ENCODE measurements at regions of chr4 and their contacts with region 1.

Region 1: GRCh38 chr4:82447886-82448285 is 17.5 kb downstream of the ENOPH1 start:
- DNase-seq: no peak
- ATAC-seq: no peak
- H3K4me3 ChIP-seq: no peak overlapping the region
- H3K27ac ChIP-seq: no peak overlapping the region
- H3K4me1 ChIP-seq: no peaks in the 10 kb centered on the region
- H3K27me3 ChIP-seq: no peaks in the 10 kb centered on the region
- CTCF ChIP-seq: no peak
- POLR2A ChIP-seq: no peak
- RAD21 ChIP-seq: no peak

Region 2: GRCh38 chr4:82890901-82891706 is 443.2 kb after region 1 on chr4 and contains the start of gene SEC31A:
- CTCF ChIA-PET with region 1: no interaction called
- POLR2A ChIA-PET with region 1: no interaction called
- dilution Hi-C with region 1: no loop called
- in situ Hi-C with region 1: no loop called
- intact Hi-C with region 1: no loop called
- DNase-seq: peak; percentile 92
- ATAC-seq: peak; percentile 95
- H3K4me3 ChIP-seq: peak within 1 kb of the TSS; percentile 94
- H3K27ac ChIP-seq: peak within 1 kb of the TSS; percentile 98
- H3K4me1 ChIP-seq: no peaks in the 10 kb centered on the region
- H3K27me3 ChIP-seq: no peaks in the 10 kb centered on the region
- CTCF ChIP-seq: no peak
- POLR2A ChIP-seq: peak; percentile 98
- RAD21 ChIP-seq: no peak
- total RNA-seq, gene SEC31A: 366 and 369 TPM in 2 replicates

Region 3: DNA sequence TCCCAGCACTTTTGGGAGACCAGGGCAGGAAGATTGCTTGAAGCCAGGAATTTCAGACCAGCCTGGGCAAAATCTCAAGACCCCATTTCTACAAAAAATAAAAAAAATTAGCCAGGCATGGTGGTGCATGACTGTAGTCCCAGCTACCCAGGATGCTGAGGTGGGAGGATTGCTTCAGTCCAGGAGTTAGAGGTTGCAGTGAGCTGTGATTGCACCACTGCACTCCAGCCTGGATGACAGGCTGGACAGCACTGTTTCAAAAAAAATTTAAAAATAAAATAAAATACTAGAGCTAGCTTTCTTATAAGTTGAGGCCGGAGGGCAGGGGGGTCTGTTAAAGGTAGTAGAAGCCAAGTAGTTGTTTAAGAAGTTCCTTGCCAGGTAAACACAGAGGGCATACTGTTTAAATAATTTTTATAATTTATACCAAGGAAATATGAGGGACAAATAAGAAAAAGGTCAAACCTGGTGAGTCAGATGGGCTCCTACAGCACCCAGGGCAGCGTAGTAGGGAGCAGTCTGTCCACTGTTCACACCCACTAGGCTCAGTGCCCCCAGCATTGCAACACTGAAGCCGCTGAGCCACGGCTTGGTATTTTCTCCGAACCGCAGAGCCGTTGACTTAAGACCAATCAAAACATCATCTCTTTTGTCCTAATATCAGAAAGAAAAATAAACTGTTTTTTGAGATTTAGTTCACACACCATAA is 819.4 kb after region 1 on chr4:
- CTCF ChIA-PET with region 1: no interaction called
- POLR2A ChIA-PET with region 1: no interaction called
- dilution Hi-C with region 1: no loop called
- in situ Hi-C with region 1: loop called (anchors 10 kb)
- intact Hi-C with region 1: no loop called
- DNase-seq: peak; percentile 74
- ATAC-seq: peak; percentile 89
- H3K4me3 ChIP-seq: no peak overlapping the region
- H3K27ac ChIP-seq: peak overlapping the region; percentile 53; the same call in 1 of the 2 replicates
- H3K4me1 ChIP-seq: peaks cover 2% of the 10 kb centered on the region; the same call in 1 of the 2 replicates
- H3K27me3 ChIP-seq: no peaks in the 10 kb centered on the region
- CTCF ChIP-seq: no peak
- POLR2A ChIP-seq: no peak
- RAD21 ChIP-seq: no peak

Measured in IMR-90 (cell line).